BJ (cell line): ENCODE measurements at regions of chr19 and their contacts with region 1.

Region 1: DNA sequence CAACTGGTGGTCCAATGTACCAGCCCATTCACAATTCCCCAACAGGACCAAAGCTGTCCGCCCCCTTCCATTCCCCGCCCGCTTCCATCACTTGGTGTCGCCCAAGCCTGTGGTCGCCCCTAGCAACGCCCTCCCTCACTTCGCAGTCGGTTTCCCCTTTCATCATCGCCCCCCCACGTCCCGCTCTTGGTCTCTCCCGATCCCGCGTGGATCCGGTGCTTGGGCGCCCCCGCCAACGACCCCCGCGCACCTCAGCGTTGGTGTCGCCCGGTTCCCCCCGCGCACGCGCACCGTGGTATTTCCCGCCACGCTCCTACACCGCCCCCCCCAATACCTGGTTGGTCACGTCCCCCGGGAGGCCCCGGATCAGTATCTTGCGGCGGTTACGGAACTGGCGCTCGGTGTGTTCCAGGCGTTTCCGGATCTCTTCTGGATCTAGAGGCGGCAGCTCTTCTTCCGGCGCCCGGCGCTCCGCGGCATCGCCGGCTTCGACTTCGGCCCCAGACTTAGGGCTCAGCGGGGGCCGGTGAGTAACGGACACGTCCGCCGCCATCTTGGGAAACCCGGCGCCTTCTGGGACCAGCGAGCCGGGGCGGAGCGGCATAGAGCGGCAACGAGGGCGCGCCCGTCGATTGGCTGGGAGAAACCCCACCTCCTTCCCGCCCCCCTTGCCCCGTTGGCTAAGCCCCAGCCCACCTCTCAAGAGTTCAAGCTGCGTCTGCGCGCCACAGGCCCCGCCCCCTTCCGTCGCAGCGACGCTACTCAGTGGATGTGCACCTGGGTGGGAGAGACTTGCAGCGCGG is at the start of gene RAVER1:
- DNase-seq: peak; percentile 69
- H3K4me3 ChIP-seq: peak within 1 kb of the TSS; percentile 97
- H3K27me3 ChIP-seq: no peaks in the 10 kb centered on the region
- CTCF ChIP-seq: peak; percentile 13; the same call in 1 of the 2 replicates
- polyA plus RNA-seq, gene RAVER1: 2.5 and 5.1 TPM in 2 replicates

Region 2: GRCh38 chr19:8569066-8569771 is 1763.9 kb before region 1 on chr19:
- CTCF ChIA-PET with region 1: no interaction called
- POLR2A ChIA-PET with region 1: interaction called, 13 read pairs
- DNase-seq: peak; percentile 79
- H3K4me3 ChIP-seq: no peak overlapping the region
- H3K27me3 ChIP-seq: no peaks in the 10 kb centered on the region
- CTCF ChIP-seq: no peak

Region 3: DNA sequence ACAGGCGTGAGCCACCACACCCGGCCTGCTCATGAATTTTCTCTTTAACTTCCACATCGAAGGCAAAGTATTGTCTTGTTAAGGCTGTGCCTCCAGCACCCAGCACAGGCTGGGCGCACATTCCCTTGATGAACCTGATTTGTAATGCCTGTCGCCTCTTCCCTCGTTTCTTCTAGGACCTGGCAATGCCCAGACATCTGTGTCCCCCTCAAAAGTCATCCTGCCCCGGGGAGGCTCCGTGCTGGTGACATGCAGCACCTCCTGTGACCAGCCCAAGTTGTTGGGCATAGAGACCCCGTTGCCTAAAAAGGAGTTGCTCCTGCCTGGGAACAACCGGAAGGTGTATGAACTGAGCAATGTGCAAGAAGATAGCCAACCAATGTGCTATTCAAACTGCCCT is 58.6 kb before region 1 on chr19:
- CTCF ChIA-PET with region 1: interaction called, 7 read pairs
- POLR2A ChIA-PET with region 1: interaction called, 10 read pairs
- DNase-seq: no peak
- H3K4me3 ChIP-seq: no peak overlapping the region
- H3K27me3 ChIP-seq: no peaks in the 10 kb centered on the region
- CTCF ChIP-seq: no peak

Region 4: GRCh38 chr19:10344780-10345179 is 11.6 kb after region 1 on chr19:
- CTCF ChIA-PET with region 1: interaction called, 8 read pairs
- POLR2A ChIA-PET with region 1: interaction called, 14 read pairs
- DNase-seq: peak; percentile 71
- H3K4me3 ChIP-seq: no peak overlapping the region
- H3K27me3 ChIP-seq: no peaks in the 10 kb centered on the region
- CTCF ChIP-seq: no peak

Region 5: GRCh38 chr19:10378144-10378543 is 45.0 kb after region 1 on chr19:
- CTCF ChIA-PET with region 1: no interaction called
- POLR2A ChIA-PET with region 1: no interaction called
- DNase-seq: no peak
- H3K4me3 ChIP-seq: no peak overlapping the region
- H3K27me3 ChIP-seq: no peaks in the 10 kb centered on the region
- CTCF ChIP-seq: no peak

Region 6: DNA sequence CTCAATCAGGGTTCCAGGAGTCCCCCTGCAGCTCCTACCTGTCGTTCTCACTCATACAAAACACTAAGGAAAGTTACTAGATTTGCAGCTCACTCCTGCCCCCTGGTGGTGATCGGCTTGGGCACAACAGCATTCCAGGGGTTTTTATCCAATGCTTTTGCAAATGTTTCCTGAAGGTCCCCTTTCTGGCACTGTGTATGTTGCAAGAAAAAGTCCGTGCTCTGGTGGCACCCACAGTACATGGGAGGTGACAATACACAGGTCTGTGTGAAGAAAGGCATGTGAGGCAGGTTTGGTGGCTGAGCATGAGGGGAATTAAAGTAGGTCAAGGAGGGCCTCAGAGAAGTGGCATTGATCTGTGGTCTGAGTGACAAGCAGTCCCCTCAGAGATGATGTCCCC is 55.8 kb after region 1 on chr19:
- CTCF ChIA-PET with region 1: interaction called, 14 read pairs
- POLR2A ChIA-PET with region 1: no interaction called
- DNase-seq: no peak
- H3K4me3 ChIP-seq: no peak overlapping the region
- H3K27me3 ChIP-seq: no peaks in the 10 kb centered on the region
- CTCF ChIP-seq: peak; percentile 93